ENCODE measurements at regions of chr19 and their contacts with region 1.

Region 1: GRCh38 chr19:18058208-18059030 is 28.3 kb downstream of the IL12RB1 start:
- DNase-seq: peak; percentile 69 to 83
- H3K4me3 ChIP-seq: no peak overlapping the region
- H3K4me3 Mint-ChIP-seq: peak overlapping the region; percentile 60
- H3K27ac Mint-ChIP-seq: no peak overlapping the region
- H3K4me1 ChIP-seq: no peaks in the 10 kb centered on the region
- H3K4me1 Mint-ChIP-seq: no peaks in the 10 kb centered on the region
- H3K27me3 ChIP-seq: no peaks in the 10 kb centered on the region
- H3K27me3 Mint-ChIP-seq: no peaks in the 10 kb centered on the region
- CTCF ChIP-seq: peak; percentile 87 to 92

Region 2: GRCh38 chr19:17938092-17938845 is 120.2 kb before region 1 on chr19:
- CTCF ChIA-PET with region 1: interaction called, 5 read pairs
- POLR2A ChIA-PET with region 1: no interaction called
- intact Hi-C with region 1: loop called (anchors 2 kb)
- DNase-seq: peak; percentile 70 to 79
- H3K4me3 ChIP-seq: no peak overlapping the region
- H3K4me3 Mint-ChIP-seq: no peak overlapping the region
- H3K27ac Mint-ChIP-seq: no peak overlapping the region
- H3K4me1 ChIP-seq: no peaks in the 10 kb centered on the region
- H3K4me1 Mint-ChIP-seq: peaks cover 5% of the 10 kb centered on the region
- H3K27me3 ChIP-seq: no peaks in the 10 kb centered on the region
- H3K27me3 Mint-ChIP-seq: no peaks in the 10 kb centered on the region
- CTCF ChIP-seq: peak; percentile 86 to 94

Region 3: DNA sequence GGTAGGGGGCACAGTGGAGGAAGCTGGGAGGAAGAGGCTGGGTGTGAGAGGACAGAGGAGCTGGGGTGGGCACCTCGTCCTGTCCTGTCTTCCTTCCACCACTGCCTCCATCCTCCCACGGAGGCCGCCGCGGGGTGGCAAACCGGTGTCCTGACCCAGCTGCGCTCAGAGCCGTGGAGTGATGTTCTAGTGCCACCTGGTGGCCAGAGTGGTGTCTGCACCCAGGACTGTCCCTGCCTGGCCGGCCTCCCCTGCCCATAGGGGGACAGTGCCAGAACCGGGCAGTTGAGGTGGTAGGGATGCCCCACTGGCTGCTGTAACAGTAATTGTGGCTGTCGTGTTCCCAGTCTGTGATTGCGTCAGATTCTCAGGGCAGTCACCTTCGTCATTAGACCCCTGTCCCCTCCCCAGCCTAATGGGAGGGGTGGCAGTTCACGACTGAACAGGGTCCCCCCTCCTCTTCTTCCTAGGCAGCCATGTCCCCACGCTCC is 61.5 kb before region 1 on chr19:
- CTCF ChIA-PET with region 1: no interaction called
- POLR2A ChIA-PET with region 1: no interaction called
- intact Hi-C with region 1: no loop called
- DNase-seq: peak; percentile 78 to 91
- H3K4me3 ChIP-seq: no peak overlapping the region
- H3K4me3 Mint-ChIP-seq: no peak overlapping the region
- H3K27ac Mint-ChIP-seq: no peak overlapping the region
- H3K4me1 ChIP-seq: peaks cover 1% of the 10 kb centered on the region; the same call in 1 of the 2 replicates
- H3K4me1 Mint-ChIP-seq: peaks cover 7% of the 10 kb centered on the region
- H3K27me3 ChIP-seq: no peaks in the 10 kb centered on the region
- H3K27me3 Mint-ChIP-seq: no peaks in the 10 kb centered on the region
- CTCF ChIP-seq: peak; percentile 92 to 95

Region 4: DNA sequence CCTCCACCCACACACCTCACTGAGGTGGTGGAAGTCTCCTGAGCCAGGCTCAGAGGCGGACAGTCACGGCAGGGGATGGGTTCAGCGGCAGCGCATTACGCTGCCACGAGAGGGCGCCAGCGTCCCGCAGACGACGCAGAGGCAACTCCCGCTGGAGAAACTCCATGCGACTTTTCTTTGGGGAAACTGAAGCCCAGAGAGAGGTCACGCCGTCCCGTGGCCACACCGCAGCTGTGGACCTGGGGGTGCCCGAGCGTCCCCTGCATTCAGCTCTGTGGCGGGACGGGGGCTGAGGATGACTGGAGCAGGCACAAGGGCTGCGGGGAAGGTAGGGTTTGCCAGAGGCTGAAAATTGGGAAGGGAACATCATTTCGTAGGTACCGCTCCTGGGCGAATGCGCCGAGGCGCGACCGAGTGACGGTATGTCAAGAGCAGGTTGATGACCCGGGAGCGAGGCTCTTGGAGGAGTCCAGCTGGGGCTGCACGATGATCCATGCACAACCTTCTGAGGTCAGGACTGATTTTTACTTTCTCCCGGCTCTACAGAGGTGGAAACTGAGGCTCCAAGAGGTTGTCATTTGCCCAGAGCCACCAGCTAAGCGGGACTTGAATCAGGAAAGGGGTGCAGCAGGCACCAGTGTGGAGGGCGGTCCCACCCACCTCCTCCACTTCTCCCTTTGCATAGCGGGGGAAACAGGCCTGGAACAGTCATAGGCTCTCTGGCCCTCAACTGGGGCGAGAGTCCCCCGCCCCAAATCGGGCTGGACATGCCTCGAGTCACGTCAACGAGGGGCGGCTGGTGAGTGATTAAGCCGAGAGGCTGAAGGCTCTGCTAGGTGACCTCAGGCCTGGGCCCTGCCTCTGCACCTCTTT is 51.1 kb before region 1 on chr19:
- CTCF ChIA-PET with region 1: no interaction called
- POLR2A ChIA-PET with region 1: no interaction called
- intact Hi-C with region 1: loop called (anchors 1 kb)
- DNase-seq: peak; percentile 60 to 80
- H3K4me3 ChIP-seq: no peak overlapping the region
- H3K4me3 Mint-ChIP-seq: no peak overlapping the region
- H3K27ac Mint-ChIP-seq: peak overlapping the region; percentile 35
- H3K4me1 ChIP-seq: 0 out of 2 replicates have a peak, but pooled peaks cover under 1% of the 10 kb centered on the region
- H3K4me1 Mint-ChIP-seq: peaks cover 7% of the 10 kb centered on the region
- H3K27me3 ChIP-seq: no peaks in the 10 kb centered on the region
- H3K27me3 Mint-ChIP-seq: no peaks in the 10 kb centered on the region
- CTCF ChIP-seq: peak; percentile 82 to 91

Region 5: GRCh38 chr19:18029617-18030338 is 28.6 kb before region 1 on chr19:
- CTCF ChIA-PET with region 1: interaction called, 10 read pairs
- POLR2A ChIA-PET with region 1: no interaction called
- intact Hi-C with region 1: loop called (anchors 1 kb)
- DNase-seq: peak; percentile 56 to 57
- H3K4me3 ChIP-seq: no peak overlapping the region
- H3K4me3 Mint-ChIP-seq: peak overlapping the region; percentile 14
- H3K27ac Mint-ChIP-seq: no peak overlapping the region
- H3K4me1 ChIP-seq: peaks cover 6% of the 10 kb centered on the region; the same call in 1 of the 2 replicates
- H3K4me1 Mint-ChIP-seq: no peaks in the 10 kb centered on the region
- H3K27me3 ChIP-seq: no peaks in the 10 kb centered on the region
- H3K27me3 Mint-ChIP-seq: no peaks in the 10 kb centered on the region
- CTCF ChIP-seq: no peak

Region 6: GRCh38 chr19:18044825-18045304 is 13.6 kb before region 1 on chr19:
- CTCF ChIA-PET with region 1: no interaction called
- POLR2A ChIA-PET with region 1: no interaction called
- intact Hi-C with region 1: no loop called
- DNase-seq: peak; percentile 33 to 43
- H3K4me3 ChIP-seq: peak overlapping the region; percentile 7; the same call in 1 of the 2 replicates
- H3K4me3 Mint-ChIP-seq: peak overlapping the region; percentile 13
- H3K27ac Mint-ChIP-seq: peak overlapping the region; percentile 29
- H3K4me1 ChIP-seq: no peaks in the 10 kb centered on the region
- H3K4me1 Mint-ChIP-seq: peaks cover 7% of the 10 kb centered on the region
- H3K27me3 ChIP-seq: no peaks in the 10 kb centered on the region
- H3K27me3 Mint-ChIP-seq: no peaks in the 10 kb centered on the region
- CTCF ChIP-seq: no peak

Region 7: DNA sequence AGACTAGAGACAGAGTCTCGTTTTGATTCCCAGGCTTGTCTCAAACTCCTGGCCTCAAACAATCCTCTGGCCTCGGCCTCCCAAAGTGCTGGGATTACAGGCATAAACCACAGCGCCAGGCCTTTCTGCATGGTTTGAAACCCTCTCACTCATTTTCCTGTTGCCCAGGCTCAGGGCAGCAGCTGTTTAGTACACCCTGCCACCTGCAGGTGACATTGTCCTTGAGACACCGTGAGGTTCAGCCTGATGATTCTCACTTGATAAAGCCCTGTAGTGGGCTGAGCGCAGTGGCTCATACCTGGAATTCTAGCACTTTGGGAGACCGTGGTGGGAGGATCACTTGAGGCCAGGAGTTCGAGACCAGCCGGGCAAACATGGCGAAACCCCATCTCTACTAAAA is 15.8 kb after region 1 on chr19:
- CTCF ChIA-PET with region 1: no interaction called
- POLR2A ChIA-PET with region 1: no interaction called
- intact Hi-C with region 1: no loop called
- DNase-seq: peak in 1 of 2 experiments; percentile 34
- H3K4me3 ChIP-seq: no peak overlapping the region
- H3K4me3 Mint-ChIP-seq: no peak overlapping the region
- H3K27ac Mint-ChIP-seq: no peak overlapping the region
- H3K4me1 ChIP-seq: no peaks in the 10 kb centered on the region
- H3K4me1 Mint-ChIP-seq: no peaks in the 10 kb centered on the region
- H3K27me3 ChIP-seq: no peaks in the 10 kb centered on the region
- H3K27me3 Mint-ChIP-seq: no peaks in the 10 kb centered on the region
- CTCF ChIP-seq: peak; percentile 27 to 45

Region 8: DNA sequence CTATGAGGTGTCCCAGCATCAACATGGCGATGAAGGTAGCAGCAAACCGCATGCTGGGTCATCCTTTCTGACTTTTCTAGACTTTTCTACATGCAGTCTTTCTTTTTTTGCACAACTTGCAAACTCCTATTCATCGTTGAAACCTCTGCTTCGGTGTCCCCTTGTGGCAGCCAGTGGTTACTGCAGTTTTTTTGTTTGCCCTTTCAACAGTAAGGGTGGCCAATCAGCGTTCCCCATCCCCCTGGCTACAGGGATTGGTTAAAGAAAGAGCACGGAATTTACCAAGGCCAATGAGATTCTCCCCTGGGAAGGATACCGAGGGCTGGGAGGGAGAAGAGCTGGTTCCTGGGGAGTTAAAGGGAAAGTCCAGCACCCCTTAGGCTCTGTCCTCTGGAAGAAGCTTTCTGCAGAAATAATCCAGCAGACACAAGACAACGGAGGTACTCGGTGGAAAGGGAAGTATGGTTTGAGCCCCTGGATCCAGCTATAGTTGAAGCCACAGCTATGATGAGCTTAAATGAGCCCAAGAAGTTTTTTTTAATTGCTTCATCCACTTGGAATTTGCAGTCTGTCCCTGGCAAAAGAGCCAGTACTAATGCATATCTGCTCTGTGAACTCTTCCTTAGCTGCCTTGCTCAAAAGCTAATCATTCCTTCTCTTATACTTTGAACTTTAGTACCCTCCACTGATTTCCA is 270.1 kb after region 1 on chr19:
- CTCF ChIA-PET with region 1: no interaction called
- POLR2A ChIA-PET with region 1: no interaction called
- intact Hi-C with region 1: no loop called
- DNase-seq: peak; percentile 92 to 94
- H3K4me3 ChIP-seq: peak overlapping the region; percentile 35
- H3K4me3 Mint-ChIP-seq: peak overlapping the region; percentile 71
- H3K27ac Mint-ChIP-seq: peak overlapping the region; percentile 74
- H3K4me1 ChIP-seq: peaks cover 7% of the 10 kb centered on the region; the same call in 1 of the 2 replicates
- H3K4me1 Mint-ChIP-seq: peaks cover 12% of the 10 kb centered on the region
- H3K27me3 ChIP-seq: no peaks in the 10 kb centered on the region
- H3K27me3 Mint-ChIP-seq: no peaks in the 10 kb centered on the region
- CTCF ChIP-seq: peak; percentile 84 to 85

Measured in Caco-2 (cell line).